OCI-LY7 (cell line): ENCODE measurements at regions of chr1 and their contacts with region 1.

Region 1: GRCh38 chr1:78004719-78005447 is at the start of gene DNAJB4:
- DNase-seq: peak; percentile 94
- H3K4me3 ChIP-seq: peak within 1 kb of the TSS; percentile 72
- H3K27ac ChIP-seq: peak within 1 kb of the TSS; percentile 68
- H3K4me1 ChIP-seq: peaks cover 38% of the 10 kb centered on the region
- CTCF ChIP-seq: no peak
- total RNA-seq, gene DNAJB4: 9.0 and 12.6 TPM in 2 replicates

Region 2: DNA sequence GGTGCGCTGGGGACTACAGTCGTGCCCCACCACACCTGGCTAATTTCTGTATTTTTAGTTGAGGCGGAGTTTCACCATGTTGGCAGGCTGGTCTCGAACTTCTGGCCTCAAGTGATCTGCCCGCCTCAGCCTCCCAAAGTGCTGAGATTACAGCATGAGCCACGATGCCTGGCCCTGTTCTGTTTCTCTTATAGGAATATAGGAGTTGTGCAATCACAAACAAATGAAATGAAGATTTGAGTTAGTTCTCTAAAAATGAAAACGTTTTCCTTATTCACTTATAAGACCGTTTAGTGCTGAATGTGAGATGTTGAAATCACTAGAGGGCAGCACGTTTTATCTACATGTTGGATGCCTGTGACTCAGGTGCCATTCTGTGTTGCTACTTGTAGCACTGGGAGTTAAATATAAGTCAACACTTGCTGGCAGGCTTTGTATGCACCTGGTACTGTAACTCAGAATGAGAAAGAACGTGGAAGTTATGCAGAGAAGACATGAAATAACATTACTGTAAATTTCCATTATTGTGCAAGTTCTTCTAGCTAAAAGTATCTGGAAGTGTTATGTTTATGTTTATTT is 179.7 kb before region 1 on chr1:
- CTCF ChIA-PET with region 1: no interaction called
- POLR2A ChIA-PET with region 1: interaction called, 10 read pairs
- intact Hi-C with region 1: no loop called
- DNase-seq: peak; percentile 88
- H3K4me3 ChIP-seq: no peak overlapping the region
- H3K27ac ChIP-seq: peak overlapping the region; percentile 70
- H3K4me1 ChIP-seq: peaks cover 38% of the 10 kb centered on the region
- CTCF ChIP-seq: peak; percentile 84

Region 3: DNA sequence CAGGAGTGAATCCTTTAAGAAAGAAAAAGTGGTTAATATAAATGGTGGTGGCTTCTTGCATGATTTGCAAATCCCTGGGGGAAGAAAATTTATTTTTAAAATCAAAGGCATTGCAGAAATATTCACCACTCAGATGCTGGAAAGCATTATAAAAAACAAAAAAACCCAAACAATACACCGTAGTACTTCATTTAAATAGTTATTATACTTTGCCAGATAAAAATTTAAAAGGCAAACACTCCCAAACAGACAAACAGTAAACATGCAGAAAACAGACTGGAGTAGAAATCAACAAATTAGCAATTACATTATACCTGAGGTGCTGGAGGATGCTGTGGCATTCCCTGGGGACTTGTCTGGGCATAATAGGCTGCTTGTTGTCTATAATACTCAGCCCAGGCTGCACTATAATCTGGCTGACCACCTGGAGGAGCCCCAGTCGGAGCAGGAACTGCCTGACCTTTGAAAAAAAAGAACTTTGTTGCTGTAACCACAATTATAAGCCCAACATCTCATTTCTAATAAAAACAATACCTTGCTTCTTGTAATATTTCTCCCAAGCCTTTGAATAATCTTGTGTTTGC is 56.0 kb before region 1 on chr1:
- CTCF ChIA-PET with region 1: no interaction called
- POLR2A ChIA-PET with region 1: interaction called, 8 read pairs
- intact Hi-C with region 1: loop called (anchors 5 kb)
- DNase-seq: peak; percentile 27
- H3K4me3 ChIP-seq: no peak overlapping the region
- H3K27ac ChIP-seq: peak overlapping the region; percentile 4
- H3K4me1 ChIP-seq: peaks cover 43% of the 10 kb centered on the region
- CTCF ChIP-seq: peak; percentile 32; the same call in 1 of the 2 replicates

Region 4: GRCh38 chr1:77986810-77987209 is 18.1 kb before region 1 on chr1:
- CTCF ChIA-PET with region 1: no interaction called
- POLR2A ChIA-PET with region 1: interaction called, 193 read pairs
- intact Hi-C with region 1: no loop called
- DNase-seq: no peak
- H3K4me3 ChIP-seq: no peak overlapping the region
- H3K27ac ChIP-seq: no peak overlapping the region
- H3K4me1 ChIP-seq: peaks cover 1% of the 10 kb centered on the region
- CTCF ChIP-seq: no peak